ENCODE measurements at regions of chr2 and their contacts with region 1.

Region 1: DNA sequence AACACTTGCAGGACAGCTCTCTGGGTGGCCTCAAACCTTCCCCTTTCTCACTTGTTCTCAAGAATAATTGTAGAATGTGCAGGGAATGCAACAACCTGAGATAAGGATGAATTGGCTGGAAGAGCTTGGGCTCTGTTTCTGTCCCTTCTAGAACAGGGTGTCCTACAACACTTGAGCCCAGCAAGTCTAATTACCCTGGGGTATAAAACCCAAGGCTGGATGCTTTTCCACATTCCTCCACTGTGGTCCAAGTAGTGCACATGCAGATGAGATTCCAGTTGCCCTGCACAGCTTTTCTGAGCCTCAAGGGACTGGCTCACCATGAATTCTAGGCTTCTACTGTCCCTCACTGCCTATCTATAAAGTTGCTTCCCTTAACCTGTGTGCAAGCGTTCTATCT is 140.8 kb upstream of the SPATS2L start:
- DNase-seq: no peak
- ATAC-seq: no peak
- H3K4me3 Mint-ChIP-seq: no peak overlapping the region
- H3K27ac Mint-ChIP-seq: no peak overlapping the region
- H3K4me1 Mint-ChIP-seq: peaks cover 38% of the 10 kb centered on the region
- H3K27me3 Mint-ChIP-seq: no peaks in the 10 kb centered on the region
- CTCF ChIP-seq: no peak

Region 2: GRCh38 chr2:200320991-200321390 is 155.3 kb after region 1 on chr2:
- CTCF ChIA-PET with region 1: no interaction called
- POLR2A ChIA-PET with region 1: interaction called, 12 read pairs
- DNase-seq: no peak
- ATAC-seq: no peak
- H3K4me3 Mint-ChIP-seq: no peak overlapping the region
- H3K27ac Mint-ChIP-seq: peak overlapping the region; percentile 86
- H3K4me1 Mint-ChIP-seq: peaks cover 83% of the 10 kb centered on the region
- H3K27me3 Mint-ChIP-seq: no peaks in the 10 kb centered on the region
- CTCF ChIP-seq: no peak

Region 3: DNA sequence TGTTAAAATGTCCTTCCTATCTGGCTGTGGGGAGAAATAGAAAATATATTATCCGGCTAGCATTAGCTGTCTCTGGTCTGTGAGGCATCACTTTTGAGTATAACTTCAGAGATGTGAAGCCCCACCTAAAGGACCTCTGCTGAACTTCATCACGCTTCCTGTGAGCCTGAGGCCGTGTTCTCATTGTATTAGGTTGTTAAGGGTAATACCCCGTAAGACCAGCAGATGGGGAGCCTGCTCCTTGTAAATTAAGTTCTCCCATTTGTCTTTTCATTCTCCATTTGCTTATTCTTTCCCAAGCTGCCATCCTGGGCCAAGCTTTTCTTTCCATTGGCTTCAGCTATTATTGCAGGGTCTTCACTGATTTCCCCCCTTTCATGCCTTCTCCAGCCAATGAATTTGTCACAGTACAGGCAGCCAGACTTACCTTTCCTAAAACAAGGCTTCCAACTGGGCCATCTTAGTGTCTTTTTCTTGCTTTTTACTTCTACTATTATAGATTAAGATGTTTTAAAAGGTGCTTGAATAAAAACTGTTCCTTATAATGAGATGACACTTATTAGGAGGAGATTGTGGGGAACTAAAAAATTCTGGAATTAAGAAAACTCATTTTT is 735.9 kb after region 1 on chr2:
- CTCF ChIA-PET with region 1: no interaction called
- POLR2A ChIA-PET with region 1: interaction called, 12 read pairs
- DNase-seq: peak; percentile 61
- ATAC-seq: peak; percentile 98
- H3K4me3 Mint-ChIP-seq: no peak overlapping the region
- H3K27ac Mint-ChIP-seq: peak overlapping the region; percentile 64; the same call in 1 of the 2 replicates
- H3K4me1 Mint-ChIP-seq: no peaks in the 10 kb centered on the region
- H3K27me3 Mint-ChIP-seq: no peaks in the 10 kb centered on the region
- CTCF ChIP-seq: peak; percentile 64